ENCODE measurements at regions of chr14 and their contacts with region 1.

Region 1: GRCh38 chr14:93115069-93115820 is 480 bp downstream of the ITPK1 start:
- DNase-seq: peak; percentile 33
- ATAC-seq: peak; percentile 79
- H3K4me3 ChIP-seq: peak overlapping the region; percentile 99
- H3K27ac ChIP-seq: peak overlapping the region; percentile 38
- H3K4me1 ChIP-seq: peaks cover 13% of the 10 kb centered on the region
- H3K27me3 ChIP-seq: no peaks in the 10 kb centered on the region
- CTCF ChIP-seq: peak in 1 of 3 experiments; percentile 1; a peak in 1 of 6 replicates
- EP300 ChIP-seq: no peak
- POLR2A ChIP-seq: peak; percentile 66; the same call in 1 of the 2 replicates
- RAD21 ChIP-seq: no peak

Region 2: GRCh38 chr14:93033983-93034670 is 81.1 kb before region 1 on chr14:
- CTCF ChIA-PET with region 1: interaction called, 56 read pairs
- POLR2A ChIA-PET with region 1: interaction called, 5 read pairs
- RAD21 ChIA-PET with region 1: interaction called, 36 read pairs
- SMC1A ChIA-PET with region 1: interaction called, 61 read pairs
- in situ Hi-C with region 1: no loop called
- intact Hi-C with region 1: loop called (anchors 1 kb)
- DNase-seq: no peak
- ATAC-seq: peak; percentile 96
- H3K4me3 ChIP-seq: no peak overlapping the region
- H3K27ac ChIP-seq: peak overlapping the region; percentile 39
- H3K4me1 ChIP-seq: peaks cover 41% of the 10 kb centered on the region
- H3K27me3 ChIP-seq: no peaks in the 10 kb centered on the region
- CTCF ChIP-seq: peak; percentile 78 to 85 (median 82)
- EP300 ChIP-seq: no peak
- POLR2A ChIP-seq: no peak
- RAD21 ChIP-seq: peak; percentile 84

Region 3: GRCh38 chr14:93073910-93074769 is 41.1 kb before region 1 on chr14:
- CTCF ChIA-PET with region 1: interaction called, 50 read pairs
- POLR2A ChIA-PET with region 1: interaction called, 22 read pairs
- RAD21 ChIA-PET with region 1: interaction called, 29 read pairs
- SMC1A ChIA-PET with region 1: interaction called, 36 read pairs
- in situ Hi-C with region 1: no loop called
- intact Hi-C with region 1: loop called (anchors 2 kb)
- DNase-seq: no peak
- ATAC-seq: peak; percentile 57
- H3K4me3 ChIP-seq: peak overlapping the region; percentile 17; the same call in 1 of the 2 replicates
- H3K27ac ChIP-seq: peak overlapping the region; percentile 81
- H3K4me1 ChIP-seq: peaks cover 33% of the 10 kb centered on the region
- H3K27me3 ChIP-seq: no peaks in the 10 kb centered on the region
- CTCF ChIP-seq: no peak
- EP300 ChIP-seq: no peak
- POLR2A ChIP-seq: peak; percentile 54
- RAD21 ChIP-seq: no peak

Region 4: GRCh38 chr14:93137864-93138263 is 22.6 kb after region 1 on chr14:
- CTCF ChIA-PET with region 1: interaction called, 287 read pairs
- POLR2A ChIA-PET with region 1: interaction called, 9 read pairs
- RAD21 ChIA-PET with region 1: interaction called, 163 read pairs
- SMC1A ChIA-PET with region 1: interaction called, 103 read pairs
- in situ Hi-C with region 1: no loop called
- intact Hi-C with region 1: loop called (anchors 1 kb)
- DNase-seq: no peak
- ATAC-seq: no peak
- H3K4me3 ChIP-seq: no peak overlapping the region
- H3K27ac ChIP-seq: no peak overlapping the region
- H3K4me1 ChIP-seq: no peaks in the 10 kb centered on the region
- H3K27me3 ChIP-seq: no peaks in the 10 kb centered on the region
- CTCF ChIP-seq: no peak
- EP300 ChIP-seq: no peak
- POLR2A ChIP-seq: no peak
- RAD21 ChIP-seq: no peak

Region 5: GRCh38 chr14:93173943-93174395 is 58.7 kb after region 1 on chr14:
- CTCF ChIA-PET with region 1: interaction called, 34 read pairs
- POLR2A ChIA-PET with region 1: interaction called, 7 read pairs
- RAD21 ChIA-PET with region 1: interaction called, 29 read pairs
- SMC1A ChIA-PET with region 1: interaction called, 22 read pairs
- in situ Hi-C with region 1: no loop called
- intact Hi-C with region 1: no loop called
- DNase-seq: no peak
- ATAC-seq: peak; percentile 42
- H3K4me3 ChIP-seq: no peak overlapping the region
- H3K27ac ChIP-seq: no peak overlapping the region
- H3K4me1 ChIP-seq: no peaks in the 10 kb centered on the region
- H3K27me3 ChIP-seq: no peaks in the 10 kb centered on the region
- CTCF ChIP-seq: no peak
- EP300 ChIP-seq: no peak
- POLR2A ChIP-seq: no peak
- RAD21 ChIP-seq: no peak

Region 6: GRCh38 chr14:93219103-93219726 is 104.0 kb after region 1 on chr14:
- CTCF ChIA-PET with region 1: interaction called, 51 read pairs
- POLR2A ChIA-PET with region 1: no interaction called
- RAD21 ChIA-PET with region 1: interaction called, 40 read pairs
- SMC1A ChIA-PET with region 1: interaction called, 24 read pairs
- in situ Hi-C with region 1: loop called (anchors 5 kb)
- intact Hi-C with region 1: loop called (anchors 1 kb)
- DNase-seq: no peak
- ATAC-seq: peak; percentile 98
- H3K4me3 ChIP-seq: no peak overlapping the region
- H3K27ac ChIP-seq: no peak overlapping the region
- H3K4me1 ChIP-seq: no peaks in the 10 kb centered on the region
- H3K27me3 ChIP-seq: no peaks in the 10 kb centered on the region
- CTCF ChIP-seq: peak; percentile 74 to 87 (median 75)
- EP300 ChIP-seq: no peak
- POLR2A ChIP-seq: no peak
- RAD21 ChIP-seq: peak; percentile 84